ENCODE measurements at regions of chr10 and their contacts with region 1.

Region 1: DNA sequence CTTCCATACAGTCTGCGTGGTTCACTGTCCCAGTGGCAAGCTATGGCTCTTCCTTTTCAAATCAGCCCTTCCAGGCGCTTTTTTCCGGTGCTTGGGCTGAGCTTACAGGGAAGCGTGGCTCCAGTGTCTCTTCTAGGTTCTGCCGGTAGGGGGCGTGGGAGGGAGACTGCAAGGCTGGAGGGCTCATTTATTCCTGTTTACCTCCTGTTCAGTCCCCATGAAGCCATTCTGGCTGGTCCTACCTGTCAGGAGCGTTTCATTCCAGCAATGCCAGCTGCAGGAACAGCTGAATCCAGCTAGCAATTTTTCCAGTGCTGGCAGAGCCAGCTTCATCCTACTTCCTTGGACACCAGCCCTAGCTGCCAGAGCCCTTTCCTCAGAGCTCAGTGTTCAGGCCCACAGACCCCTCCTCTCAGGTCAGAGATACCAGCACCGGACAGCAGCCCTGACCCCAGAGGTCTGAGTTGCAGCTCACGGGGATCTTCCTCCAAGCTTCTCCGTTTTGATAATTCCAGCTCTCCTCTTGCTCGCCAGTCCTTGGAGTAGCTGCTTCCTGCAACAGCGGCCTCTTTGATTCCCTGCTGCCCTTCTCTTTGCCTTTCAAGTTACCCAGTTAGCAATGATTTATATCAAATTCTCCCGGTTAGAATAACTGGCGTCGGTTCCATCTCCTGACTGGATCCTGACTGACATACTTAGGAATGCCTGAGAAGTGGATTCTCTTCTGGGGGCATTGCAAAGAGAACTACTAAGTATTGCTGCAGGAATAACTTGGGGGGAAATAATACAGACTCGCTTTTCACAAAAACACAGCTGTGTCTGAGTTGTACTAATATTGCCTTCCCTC is 129.8 kb downstream of the FRMD4A start:
- ATAC-seq: peak in 1 of 8 experiments; percentile 20
- H3K4me3 ChIP-seq: no peak overlapping the region
- H3K27ac ChIP-seq: no peak overlapping the region
- H3K4me1 ChIP-seq: peaks cover 12 to 18% of the 10 kb centered on the region in 2 donors

Region 2: DNA sequence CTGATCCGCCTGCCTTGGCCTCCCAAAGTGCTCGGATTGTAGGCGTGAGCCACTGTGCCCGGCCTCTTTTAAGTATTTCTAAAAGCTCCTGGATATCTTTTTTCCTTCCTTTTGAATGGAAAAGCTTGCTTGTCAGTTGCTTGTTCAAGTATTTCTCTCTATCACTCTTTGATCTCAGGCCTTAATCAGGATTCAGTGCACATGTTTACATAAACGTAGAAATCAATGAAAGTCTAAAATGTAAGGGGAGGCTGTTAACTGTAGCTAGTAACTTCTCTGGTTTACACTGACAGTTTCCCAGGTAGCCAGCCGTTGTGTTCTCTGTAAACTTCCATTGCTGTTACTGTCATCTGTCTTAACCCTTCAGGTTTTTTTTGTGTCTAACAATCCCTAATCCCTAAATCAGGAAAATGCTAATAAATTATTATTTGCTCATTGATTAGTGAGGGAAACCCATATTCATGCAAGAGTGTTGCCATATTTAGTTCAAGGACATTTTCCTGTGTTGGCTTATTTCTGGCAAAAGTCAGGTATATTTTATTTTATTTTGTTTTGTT is 615.6 kb before region 1 on chr10:
- in situ Hi-C with region 1: no loop called
- ATAC-seq: no peak
- H3K4me3 ChIP-seq: no peak overlapping the region
- H3K27ac ChIP-seq: no peak overlapping the region
- H3K4me1 ChIP-seq: peaks cover 4 to 9% of the 10 kb centered on the region in 2 donors

Region 3: GRCh38 chr10:14332903-14333302 is 132.0 kb after region 1 on chr10:
- in situ Hi-C with region 1: no loop called
- ATAC-seq: no peak
- H3K4me3 ChIP-seq: no peak overlapping the region
- H3K27ac ChIP-seq: no peak overlapping the region
- H3K4me1 ChIP-seq: peaks cover 16 to 24% of the 10 kb centered on the region in 2 donors

Region 4: DNA sequence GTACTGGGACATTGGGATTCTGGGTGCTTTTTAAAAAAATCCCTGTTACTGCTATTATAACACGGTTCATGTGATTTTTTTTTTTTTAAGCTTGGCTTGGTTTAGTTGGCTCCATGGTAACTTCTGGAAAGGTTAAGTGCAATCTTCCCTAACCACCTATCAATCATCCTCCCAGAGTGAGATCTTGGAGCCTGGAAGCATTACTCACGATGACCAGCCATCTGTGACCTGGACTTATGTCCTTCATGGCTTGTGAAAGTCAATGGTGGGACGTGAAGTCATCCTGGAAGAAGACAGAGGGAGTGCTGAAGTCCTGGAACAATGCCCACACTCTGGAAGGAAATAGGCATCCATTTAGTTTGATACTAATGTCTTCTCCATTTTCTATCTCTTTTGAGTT is 265.3 kb after region 1 on chr10:
- in situ Hi-C with region 1: loop called in 1 of 9 experiments (anchors 25 kb)
- ATAC-seq: peak in 2 of 8 experiments; percentile 9 to 12
- H3K4me3 ChIP-seq: no peak overlapping the region
- H3K27ac ChIP-seq: no peak overlapping the region
- H3K4me1 ChIP-seq: peaks cover 15 to 21% of the 10 kb centered on the region in 2 donors

Measured in motor neuron (in vitro differentiated cells).